Psoas muscle (tissue), 8 donors: ENCODE measurements at regions of chr3 and their contacts with region 1.

Region 1: GRCh38 chr3:52892625-52893311 is 4.6 kb downstream of the STIMATE start:
- DNase-seq: no peak
- ATAC-seq: peak in 3 of 4 donors; percentile 29 to 61 (median 54)
- H3K4me3 ChIP-seq: peak overlapping the region; percentile 57
- H3K27ac ChIP-seq: peak overlapping the region; percentile 89
- H3K4me1 ChIP-seq: peaks cover 44% of the 10 kb centered on the region
- H3K27me3 ChIP-seq: no peaks in the 10 kb centered on the region
- CTCF ChIP-seq: no peak

Region 2: GRCh38 chr3:52843106-52843865 is 49.5 kb before region 1 on chr3:
- intact Hi-C with region 1: loop called in 1 of 2 experiments (anchors 2 kb)
- DNase-seq: peak in 1 of 2 donors; percentile 70
- ATAC-seq: peak in 2 of 4 donors; percentile 2 to 13
- H3K4me3 ChIP-seq: no peak overlapping the region
- H3K27ac ChIP-seq: peak overlapping the region; percentile 97
- H3K4me1 ChIP-seq: peaks cover 96% of the 10 kb centered on the region
- H3K27me3 ChIP-seq: no peaks in the 10 kb centered on the region
- CTCF ChIP-seq: no peak